ENCODE measurements at regions of chr18 and their contacts with region 1.

Region 1: GRCh38 chr18:44895176-44895798 is 214.6 kb downstream of the SETBP1 start:
- DNase-seq: peak; percentile 11 to 44 (median 18)
- ATAC-seq: peak; percentile 74
- H3K4me3 ChIP-seq: no peak overlapping the region
- H3K27ac ChIP-seq: no peak overlapping the region
- H3K4me1 ChIP-seq: no peaks in the 10 kb centered on the region
- H3K27me3 ChIP-seq: no peaks in the 10 kb centered on the region
- CTCF ChIP-seq: peak; percentile 17 to 50 (median 43); a peak in 2 of 6 replicates
- EP300 ChIP-seq: no peak
- POLR2A ChIP-seq: no peak
- RAD21 ChIP-seq: peak; percentile 50 to 60

Region 2: GRCh38 chr18:44579028-44579702 is 316.1 kb before region 1 on chr18:
- CTCF ChIA-PET with region 1: no interaction called
- POLR2A ChIA-PET with region 1: no interaction called
- in situ Hi-C with region 1: no loop called
- intact Hi-C with region 1: loop called (anchors 10 kb)
- DNase-seq: peak; percentile 8 to 16 (median 14)
- ATAC-seq: peak; percentile 63; the same call in 2 of the 3 replicates
- H3K4me3 ChIP-seq: no peak overlapping the region
- H3K27ac ChIP-seq: no peak overlapping the region
- H3K4me1 ChIP-seq: no peaks in the 10 kb centered on the region
- H3K27me3 ChIP-seq: no peaks in the 10 kb centered on the region
- CTCF ChIP-seq: peak; percentile 33 to 48 (median 48); a peak in 4 of 6 replicates
- EP300 ChIP-seq: no peak
- POLR2A ChIP-seq: no peak
- RAD21 ChIP-seq: peak; percentile 22 to 31; a peak in 2 of 4 replicates

Region 3: GRCh38 chr18:44679056-44679905 is 216.0 kb before region 1 on chr18:
- CTCF ChIA-PET with region 1: no interaction called
- POLR2A ChIA-PET with region 1: no interaction called
- in situ Hi-C with region 1: no loop called
- intact Hi-C with region 1: loop called (anchors 10 kb)
- DNase-seq: peak; percentile 67 to 79 (median 69)
- ATAC-seq: peak; percentile 100
- H3K4me3 ChIP-seq: peak overlapping the region; percentile 36
- H3K27ac ChIP-seq: no peak overlapping the region
- H3K4me1 ChIP-seq: peaks cover 0 to 10% of the 10 kb centered on the region in 2 experiments; a peak in 2 of 5 replicates
- H3K27me3 ChIP-seq: peaks cover 2 to 9% of the 10 kb centered on the region in 2 experiments; a peak in 3 of 5 replicates
- CTCF ChIP-seq: peak; percentile 47 to 65 (median 53); a peak in 5 of 6 replicates
- EP300 ChIP-seq: no peak
- POLR2A ChIP-seq: no peak
- RAD21 ChIP-seq: peak; percentile 40 to 48; a peak in 3 of 4 replicates

Region 4: DNA sequence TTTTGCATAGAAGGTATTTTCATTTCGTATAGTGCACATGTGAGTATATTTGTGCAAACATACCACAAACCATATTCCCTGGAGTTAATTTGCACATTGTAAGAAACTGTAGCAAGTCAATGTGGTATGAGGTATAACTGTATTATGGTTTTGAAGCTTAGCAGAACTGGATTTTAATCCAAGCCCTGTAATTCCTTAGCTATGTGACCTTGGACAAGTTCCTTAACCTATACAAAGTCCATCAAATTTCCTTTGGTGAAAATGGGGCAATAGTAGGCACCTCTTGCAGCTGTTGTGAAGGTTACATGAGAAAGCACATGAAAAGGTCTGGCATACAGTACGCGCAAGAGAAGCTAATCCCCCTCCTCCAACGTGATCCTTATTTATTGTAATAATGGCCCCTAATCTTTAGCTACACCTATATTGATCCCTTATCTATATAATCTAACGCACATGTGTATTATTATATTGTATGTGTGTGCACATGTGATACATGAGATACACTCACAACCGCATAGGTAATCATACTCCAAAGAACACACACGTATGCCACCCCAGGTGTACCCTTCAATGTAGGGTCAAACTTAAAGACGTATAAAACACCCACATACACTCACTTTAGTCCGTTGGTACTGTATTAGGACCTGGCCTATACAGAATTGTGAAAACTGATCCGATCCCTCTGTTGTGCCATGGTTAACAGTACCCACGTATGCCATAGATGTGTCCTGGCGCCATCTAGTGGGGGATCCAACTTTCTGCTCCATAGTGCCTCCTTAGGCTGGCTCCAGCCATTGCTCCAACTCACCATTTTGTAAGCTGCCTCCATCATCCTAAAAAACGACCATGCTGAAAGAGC is 317.1 kb after region 1 on chr18:
- CTCF ChIA-PET with region 1: no interaction called
- POLR2A ChIA-PET with region 1: no interaction called
- in situ Hi-C with region 1: no loop called
- intact Hi-C with region 1: loop called (anchors 5 kb)
- DNase-seq: peak; percentile 41 to 68 (median 44)
- ATAC-seq: peak; percentile 97
- H3K4me3 ChIP-seq: no peak overlapping the region
- H3K27ac ChIP-seq: no peak overlapping the region
- H3K4me1 ChIP-seq: no peaks in the 10 kb centered on the region
- H3K27me3 ChIP-seq: no peaks in the 10 kb centered on the region
- CTCF ChIP-seq: peak; percentile 93 to 100 (median 100)
- EP300 ChIP-seq: no peak
- POLR2A ChIP-seq: no peak
- RAD21 ChIP-seq: peak; percentile 69 to 75

Measured in K562 (cell line).